Activated CD8-positive, alpha-beta T cell treated with anti-CD3 and anti-CD28 coated beads for 36 hours (primary cell): ENCODE measurements at regions of chr12 and their contacts with region 1.

Region 1: DNA sequence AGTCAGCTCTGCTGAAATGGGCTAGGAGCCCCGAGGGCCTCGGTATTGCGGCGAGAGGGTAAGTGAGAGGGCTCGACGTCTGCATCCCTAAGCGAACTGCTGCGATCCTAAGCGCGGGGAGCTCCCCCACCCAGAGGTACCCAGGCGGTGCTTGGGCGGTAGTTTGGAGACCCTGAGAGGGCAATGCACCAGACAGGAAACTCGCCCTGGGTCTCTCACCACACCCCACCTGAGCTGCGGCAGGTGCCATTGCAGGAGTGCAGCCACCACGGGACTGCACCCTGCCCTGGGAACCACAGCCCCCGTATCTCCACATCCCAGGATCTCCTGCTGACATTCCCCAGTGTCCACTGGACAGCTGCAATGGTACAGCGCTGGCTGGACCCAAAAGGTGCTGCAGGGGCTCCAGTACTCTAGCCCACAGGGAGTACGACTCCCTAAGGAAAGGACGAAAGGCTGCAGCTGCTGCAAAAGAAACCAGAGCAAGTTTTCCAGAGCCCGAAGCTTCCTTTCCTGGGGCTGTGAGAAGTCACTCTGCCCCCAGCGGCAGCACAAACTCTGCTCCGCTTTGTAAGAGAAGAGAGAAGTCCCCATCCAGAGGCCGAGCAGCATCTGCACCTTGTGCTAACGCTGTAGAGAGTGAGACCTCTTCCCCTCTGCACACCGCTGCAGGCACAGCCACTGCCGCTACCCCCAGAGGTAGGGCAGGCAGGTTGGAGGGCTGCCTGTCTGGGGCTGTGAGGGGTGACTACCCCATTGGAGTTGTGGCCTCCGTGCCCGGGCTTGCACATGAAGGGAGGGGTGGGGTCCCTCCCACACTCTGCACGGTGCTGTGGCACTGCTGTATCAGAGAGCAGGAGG is 31.1 kb upstream of the MON2 start:
- DNase-seq: peak; percentile 66
- ATAC-seq: peak; percentile 86
- H3K4me3 Mint-ChIP-seq: peak overlapping the region; percentile 68
- H3K27ac Mint-ChIP-seq: no peak overlapping the region
- H3K4me1 Mint-ChIP-seq: peaks cover 6% of the 10 kb centered on the region
- H3K27me3 Mint-ChIP-seq: peaks cover 20% of the 10 kb centered on the region
- CTCF ChIP-seq: peak; percentile 63

Region 2: DNA sequence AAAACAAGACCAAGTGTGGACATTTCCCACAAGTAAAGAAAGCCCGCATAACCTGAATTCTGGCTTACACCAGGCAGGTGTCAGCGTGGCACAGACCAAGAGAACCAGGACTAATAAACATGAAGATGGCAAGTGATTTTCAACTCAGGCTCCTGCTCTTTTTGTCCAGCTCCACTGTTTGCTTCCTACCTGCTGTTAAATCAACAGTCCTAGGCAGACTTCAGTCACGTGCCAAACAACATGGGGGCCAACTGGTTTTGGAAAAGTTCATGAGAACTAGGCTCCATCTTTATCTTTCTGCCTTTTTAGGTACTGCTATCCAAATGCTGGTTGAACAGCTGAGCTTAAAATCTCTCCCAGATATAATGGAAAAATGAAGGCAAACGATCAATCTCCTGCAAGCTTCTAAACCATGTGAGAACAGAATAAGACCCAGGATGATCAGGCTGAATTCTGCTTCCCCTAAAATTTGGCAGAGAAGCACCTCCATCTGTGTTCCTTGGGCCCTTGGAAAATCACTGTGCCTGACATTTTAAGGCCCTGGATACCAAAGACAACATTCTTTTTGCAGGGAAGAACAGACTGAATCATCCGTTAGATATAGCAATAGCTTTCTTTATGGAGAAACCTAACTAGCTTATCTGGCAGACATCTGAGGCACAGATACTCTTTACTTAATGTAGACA is 390.9 kb before region 1 on chr12:
- CTCF ChIA-PET with region 1: no interaction called
- POLR2A ChIA-PET with region 1: no interaction called
- intact Hi-C with region 1: no loop called
- DNase-seq: no peak
- ATAC-seq: no peak
- H3K4me3 Mint-ChIP-seq: no peak overlapping the region
- H3K27ac Mint-ChIP-seq: no peak overlapping the region
- H3K4me1 Mint-ChIP-seq: no peaks in the 10 kb centered on the region
- H3K27me3 Mint-ChIP-seq: no peaks in the 10 kb centered on the region
- CTCF ChIP-seq: no peak

Region 3: GRCh38 chr12:62192180-62192902 is 243.2 kb before region 1 on chr12:
- CTCF ChIA-PET with region 1: no interaction called
- POLR2A ChIA-PET with region 1: no interaction called
- intact Hi-C with region 1: no loop called
- DNase-seq: peak; percentile 61
- ATAC-seq: peak; percentile 86
- H3K4me3 Mint-ChIP-seq: peak overlapping the region; percentile 74
- H3K27ac Mint-ChIP-seq: no peak overlapping the region
- H3K4me1 Mint-ChIP-seq: peaks cover 20% of the 10 kb centered on the region
- H3K27me3 Mint-ChIP-seq: peaks cover 38% of the 10 kb centered on the region
- CTCF ChIP-seq: peak; percentile 78

Region 4: GRCh38 chr12:62331306-62331705 is 104.2 kb before region 1 on chr12:
- CTCF ChIA-PET with region 1: no interaction called
- POLR2A ChIA-PET with region 1: no interaction called
- intact Hi-C with region 1: no loop called
- DNase-seq: no peak
- ATAC-seq: no peak
- H3K4me3 Mint-ChIP-seq: no peak overlapping the region
- H3K27ac Mint-ChIP-seq: peak overlapping the region; percentile 15
- H3K4me1 Mint-ChIP-seq: peaks cover 20% of the 10 kb centered on the region
- H3K27me3 Mint-ChIP-seq: no peaks in the 10 kb centered on the region
- CTCF ChIP-seq: no peak

Region 5: DNA sequence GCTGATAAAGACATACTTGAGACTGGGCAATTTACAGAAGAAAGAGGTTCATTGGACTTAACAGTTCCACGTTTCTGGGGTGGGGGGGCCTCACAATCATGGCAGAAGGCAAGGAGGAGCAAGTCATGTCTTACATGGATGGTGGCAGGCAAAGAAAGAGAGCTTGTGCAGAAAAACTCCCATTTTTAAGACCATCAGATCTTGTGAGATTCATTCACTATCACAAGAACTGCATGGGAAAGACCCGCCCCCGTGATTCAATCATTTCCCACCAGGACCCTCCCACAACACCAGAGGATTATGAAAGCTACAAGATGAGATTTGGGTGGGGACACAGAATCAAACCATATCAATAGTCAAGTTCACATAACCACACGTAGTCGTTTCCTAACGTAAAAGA is 89.9 kb before region 1 on chr12:
- CTCF ChIA-PET with region 1: no interaction called
- POLR2A ChIA-PET with region 1: no interaction called
- intact Hi-C with region 1: no loop called
- DNase-seq: no peak
- ATAC-seq: no peak
- H3K4me3 Mint-ChIP-seq: no peak overlapping the region
- H3K27ac Mint-ChIP-seq: no peak overlapping the region
- H3K4me1 Mint-ChIP-seq: peaks cover 31% of the 10 kb centered on the region
- H3K27me3 Mint-ChIP-seq: no peaks in the 10 kb centered on the region
- CTCF ChIP-seq: no peak

Region 6: DNA sequence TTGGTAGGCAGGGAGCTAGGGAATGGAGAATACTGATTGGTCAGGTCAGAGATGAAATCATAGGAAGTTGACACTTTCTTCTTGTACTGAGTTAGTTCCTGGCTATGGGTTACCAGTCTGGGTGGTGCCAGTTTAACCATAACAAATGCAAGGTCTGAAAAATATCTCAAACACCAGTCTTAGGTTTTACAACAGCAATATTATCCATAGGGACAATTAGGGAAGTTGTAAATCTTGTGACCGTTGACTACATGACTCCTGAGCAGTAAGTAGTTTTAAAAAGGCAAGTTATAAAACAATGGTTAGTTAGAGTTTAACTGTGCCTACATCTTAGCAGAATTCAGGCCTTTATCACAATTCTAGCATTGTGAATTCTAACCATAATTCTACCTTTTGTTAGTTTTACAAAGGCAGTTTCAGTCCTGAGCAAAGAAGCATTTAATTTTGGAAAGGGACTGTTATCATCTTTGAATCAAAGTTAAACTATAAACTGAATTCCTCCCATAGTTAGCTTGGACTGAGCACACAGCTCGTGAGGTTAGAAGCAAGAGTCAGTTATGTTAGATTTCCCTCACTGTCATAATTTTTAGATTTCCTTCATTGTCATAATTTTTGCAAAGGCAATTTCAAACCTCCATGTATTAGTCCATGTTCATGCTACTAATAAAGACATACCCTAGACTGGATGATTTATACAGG is 11.4 kb after region 1 on chr12:
- CTCF ChIA-PET with region 1: interaction called, 18 read pairs
- POLR2A ChIA-PET with region 1: no interaction called
- intact Hi-C with region 1: no loop called
- DNase-seq: no peak
- ATAC-seq: no peak
- H3K4me3 Mint-ChIP-seq: no peak overlapping the region
- H3K27ac Mint-ChIP-seq: no peak overlapping the region
- H3K4me1 Mint-ChIP-seq: no peaks in the 10 kb centered on the region
- H3K27me3 Mint-ChIP-seq: peaks cover 1% of the 10 kb centered on the region
- CTCF ChIP-seq: no peak

Region 7: DNA sequence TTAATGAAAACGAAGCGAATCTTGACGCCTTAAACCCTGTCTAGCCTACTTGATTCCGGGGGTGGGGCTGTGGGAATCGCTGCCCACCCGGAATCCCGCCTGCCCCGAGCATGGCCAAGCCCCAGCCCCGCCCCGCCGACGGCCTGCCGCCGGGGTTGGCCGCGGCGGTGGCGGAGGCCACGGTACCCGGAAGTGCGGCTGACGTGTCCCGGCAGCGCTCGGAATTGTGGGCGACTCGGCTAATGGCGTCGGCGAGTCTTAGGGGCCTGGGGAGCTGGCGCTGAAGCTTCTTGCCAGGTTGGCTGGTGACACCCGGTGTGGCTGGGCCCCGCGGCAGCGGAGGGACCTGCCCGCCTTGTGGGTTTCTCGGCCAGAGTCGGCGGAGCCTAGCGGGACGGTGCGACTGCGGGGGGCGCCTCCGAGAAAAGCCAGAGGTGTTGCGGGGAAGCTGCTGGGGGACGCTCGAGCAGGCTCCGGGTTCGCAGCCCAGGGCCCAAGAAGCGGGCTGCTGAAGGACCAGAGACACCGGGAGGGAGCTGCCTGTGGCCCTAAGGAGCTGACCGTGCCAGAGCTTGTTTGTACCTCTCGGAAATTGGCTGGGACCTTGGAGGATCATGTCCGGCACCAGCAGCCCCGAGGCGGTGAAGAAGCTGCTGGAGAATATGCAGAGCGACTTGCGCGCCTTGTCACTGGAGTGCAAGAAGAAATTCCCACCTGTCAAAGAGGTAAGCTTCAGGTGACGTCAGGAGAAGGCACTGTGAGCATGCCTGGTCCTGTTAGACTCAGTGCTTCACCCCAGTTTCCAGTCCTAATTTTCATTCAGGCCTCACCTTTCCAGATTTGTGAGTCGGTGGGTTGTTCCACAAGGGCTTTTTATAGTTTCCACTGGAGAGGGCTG is 31.3 kb after region 1 on chr12 and contains the start of gene MON2:
- CTCF ChIA-PET with region 1: interaction called, 31 read pairs
- POLR2A ChIA-PET with region 1: no interaction called
- intact Hi-C with region 1: no loop called
- DNase-seq: peak; percentile 86
- ATAC-seq: peak; percentile 98
- H3K4me3 Mint-ChIP-seq: peak within 1 kb of the TSS; percentile 78
- H3K27ac Mint-ChIP-seq: peak within 1 kb of the TSS; percentile 94
- H3K4me1 Mint-ChIP-seq: peaks cover 21% of the 10 kb centered on the region
- H3K27me3 Mint-ChIP-seq: no peaks in the 10 kb centered on the region
- CTCF ChIP-seq: no peak
- total RNA-seq, gene MON2: 25.5 to 29.0 TPM

Region 8: DNA sequence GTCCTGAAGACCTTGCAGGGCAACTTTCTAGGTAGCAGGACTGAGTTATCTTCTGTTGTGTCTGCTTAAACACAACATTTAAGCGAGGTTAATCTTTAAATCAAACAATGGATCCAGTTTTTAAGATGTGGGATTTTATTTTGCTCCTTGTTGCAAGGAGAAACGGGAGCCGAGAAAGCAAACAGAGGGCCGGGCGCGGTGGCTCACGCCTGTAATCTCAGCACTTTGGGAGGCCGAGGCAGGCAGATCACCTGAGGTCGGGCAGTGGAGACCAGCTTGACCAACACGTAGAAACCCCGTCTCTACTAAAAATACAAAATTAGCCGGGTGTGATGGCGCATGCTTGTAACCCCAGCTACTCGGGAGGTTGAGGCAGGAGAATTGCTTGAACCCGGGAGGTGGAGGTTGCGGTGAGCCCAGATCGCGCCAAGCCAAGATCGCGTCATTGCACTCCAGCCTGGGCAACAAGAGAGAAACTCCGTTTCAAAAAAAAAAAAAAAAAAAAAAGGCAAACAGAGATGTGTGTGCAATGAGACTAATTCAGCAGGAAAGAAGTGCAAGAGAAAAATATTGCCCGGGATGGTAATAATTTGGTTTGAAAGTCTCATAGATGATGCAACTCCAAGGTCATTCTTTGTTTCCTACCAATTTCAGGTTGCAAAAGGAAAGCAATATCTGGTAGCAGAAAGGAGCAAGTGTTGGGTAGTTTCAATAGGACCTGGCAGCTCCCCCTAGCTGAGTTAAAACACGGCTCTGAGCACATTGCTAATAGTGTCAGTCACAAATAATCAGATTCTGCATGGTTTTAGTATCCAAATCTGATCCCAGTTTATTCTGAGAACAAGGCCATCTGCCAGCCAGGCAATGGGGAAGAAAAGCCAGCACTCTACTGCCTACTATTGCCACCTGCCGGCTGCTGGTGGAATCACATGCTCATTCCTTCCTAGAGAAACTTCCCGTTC is 358.0 kb after region 1 on chr12:
- CTCF ChIA-PET with region 1: interaction called, 128 read pairs
- POLR2A ChIA-PET with region 1: no interaction called
- intact Hi-C with region 1: loop called (anchors 1 kb)
- DNase-seq: peak; percentile 83
- ATAC-seq: peak; percentile 78
- H3K4me3 Mint-ChIP-seq: no peak overlapping the region
- H3K27ac Mint-ChIP-seq: no peak overlapping the region
- H3K4me1 Mint-ChIP-seq: no peaks in the 10 kb centered on the region
- H3K27me3 Mint-ChIP-seq: peaks cover 7% of the 10 kb centered on the region
- CTCF ChIP-seq: peak; percentile 96

Region 9: DNA sequence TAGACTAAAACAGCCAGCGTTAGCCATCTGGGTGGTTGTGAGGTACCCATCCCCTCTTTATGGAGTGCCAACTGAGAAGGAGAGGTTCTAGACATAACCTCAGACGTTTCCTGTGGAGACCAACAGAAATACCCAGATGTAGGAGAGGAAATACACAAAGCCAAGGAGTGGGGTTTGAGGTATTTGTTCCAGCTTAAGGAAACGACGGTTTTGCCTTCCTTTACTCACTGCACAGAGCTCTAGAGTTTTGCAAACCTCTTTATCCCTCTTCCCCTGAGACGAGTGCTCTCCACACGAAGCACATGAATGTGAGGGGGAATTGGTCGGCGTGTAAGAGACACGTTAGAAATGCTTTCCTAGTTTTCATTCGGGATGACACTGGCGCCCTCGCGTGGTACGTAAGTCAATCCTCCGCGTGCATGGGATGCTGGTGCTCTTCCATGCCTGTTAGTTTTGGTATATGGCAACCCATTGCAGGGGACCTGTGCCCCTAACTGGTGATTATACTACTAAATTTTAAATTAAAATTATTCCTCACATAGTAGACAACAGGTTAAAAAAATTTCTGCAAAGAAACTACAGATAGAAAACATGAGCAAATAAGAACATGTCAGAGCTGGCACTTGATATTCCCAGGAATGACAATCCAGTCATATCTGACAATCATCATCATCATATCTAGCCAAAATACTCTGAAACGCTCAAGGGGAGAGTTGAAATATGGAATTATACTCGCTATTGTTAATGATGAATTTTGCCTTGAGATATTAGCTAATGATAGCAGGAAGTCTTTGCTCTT is 377.7 kb after region 1 on chr12:
- CTCF ChIA-PET with region 1: interaction called, 16 read pairs
- POLR2A ChIA-PET with region 1: no interaction called
- intact Hi-C with region 1: loop called (anchors 5 kb)
- DNase-seq: peak; percentile 63
- ATAC-seq: peak; percentile 22
- H3K4me3 Mint-ChIP-seq: peak overlapping the region; percentile 23
- H3K27ac Mint-ChIP-seq: no peak overlapping the region
- H3K4me1 Mint-ChIP-seq: peaks cover 16% of the 10 kb centered on the region
- H3K27me3 Mint-ChIP-seq: peaks cover 15% of the 10 kb centered on the region
- CTCF ChIP-seq: peak; percentile 58